Naive thymus-derived CD4-positive, alpha-beta T cell (primary cell): ENCODE measurements at regions of chr16 and their contacts with region 1.

Region 1: DNA sequence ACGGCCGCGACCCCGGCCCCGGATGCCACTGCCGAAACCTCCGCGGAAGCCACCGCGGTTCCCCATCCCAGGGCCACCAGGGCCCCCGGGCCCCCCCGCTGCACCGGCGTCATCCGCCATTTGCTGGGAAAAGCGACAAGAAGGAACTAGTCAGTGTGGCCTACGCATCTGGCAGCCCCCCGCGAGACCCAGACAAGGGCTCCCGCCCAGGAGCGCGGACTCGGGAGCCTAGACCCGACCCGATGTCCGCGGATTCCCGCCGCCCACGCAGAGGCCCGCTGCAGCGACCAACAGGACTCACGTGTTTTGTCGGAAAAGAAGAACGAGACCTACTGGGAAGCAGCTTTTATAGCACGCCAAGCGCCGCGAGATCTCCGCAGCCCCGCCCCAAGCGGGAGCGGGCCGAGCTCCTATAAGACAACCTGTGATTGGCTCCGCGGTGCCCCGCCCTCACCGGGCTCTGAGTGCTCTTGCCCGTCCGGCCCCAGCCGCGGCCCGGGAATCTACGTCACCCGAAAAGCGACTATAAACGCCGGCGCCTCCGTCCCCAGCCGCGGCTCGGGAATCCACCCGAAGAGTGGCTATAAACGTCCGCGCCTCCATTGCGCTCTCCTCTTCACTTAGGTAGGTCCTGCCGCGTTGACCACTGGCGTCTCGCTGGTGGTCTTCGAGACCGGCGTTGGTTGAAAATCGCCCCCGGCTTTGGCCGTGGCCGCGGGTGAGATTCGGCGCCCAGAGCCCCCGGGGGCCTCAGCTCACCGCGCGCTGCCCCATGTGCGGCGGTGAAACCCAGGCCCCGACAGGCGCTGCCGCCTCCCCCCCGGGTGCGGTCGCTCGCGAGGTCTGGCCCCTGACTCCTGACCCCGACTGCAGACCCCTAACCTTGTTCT is at the start of gene RPS2:
- DNase-seq: peak; percentile 94 to 99 (median 97)
- ATAC-seq: peak; percentile 97
- H3K4me3 ChIP-seq: peak within 1 kb of the TSS; percentile 81
- H3K4me3 Mint-ChIP-seq: peak within 1 kb of the TSS; percentile 89 to 97 (median 94)
- H3K27ac ChIP-seq: peak within 1 kb of the TSS; percentile 100
- H3K27ac Mint-ChIP-seq: peak within 1 kb of the TSS; percentile 95 to 98 (median 97)
- H3K4me1 ChIP-seq: peaks cover 25 to 41% of the 10 kb centered on the region in 2 donors
- H3K4me1 Mint-ChIP-seq: peaks cover 21 to 49% (median 32%) of the 10 kb centered on the region in 7 donors
- H3K27me3 ChIP-seq: no peaks in the 10 kb centered on the region
- H3K27me3 Mint-ChIP-seq: no peaks in the 10 kb centered on the region
- total RNA-seq, gene RPS2: 2,562 to 3,376 (median 2,918) TPM

Region 2: GRCh38 chr16:1782352-1783091 is 182.2 kb before region 1 on chr16 and contains the starts of genes NUBP2 and SPSB3:
- CTCF ChIA-PET with region 1: no interaction called
- POLR2A ChIA-PET with region 1: interaction called, 15 read pairs
- intact Hi-C with region 1: no loop called
- DNase-seq: peak; percentile 83 to 98 (median 97)
- ATAC-seq: peak; percentile 92
- H3K4me3 ChIP-seq: peak within 1 kb of the TSS; percentile 92
- H3K4me3 Mint-ChIP-seq: peak within 1 kb of the TSS; percentile 90 to 98 (median 94)
- H3K27ac ChIP-seq: peak within 1 kb of the TSS; percentile 76
- H3K27ac Mint-ChIP-seq: peak within 1 kb of the TSS; percentile 77 to 98 (median 93)
- H3K4me1 ChIP-seq: peaks cover 13 to 28% of the 10 kb centered on the region in 2 donors
- H3K4me1 Mint-ChIP-seq: peaks cover 0 to 48% (median 22%) of the 10 kb centered on the region in 7 donors
- H3K27me3 ChIP-seq: no peaks in the 10 kb centered on the region
- H3K27me3 Mint-ChIP-seq: peaks cover 0 to 2% (median 0%) of the 10 kb centered on the region in 5 donors
- total RNA-seq, gene NUBP2: 39.3 to 60.2 (median 48.6) TPM
- total RNA-seq, gene SPSB3: 38.2 to 127 (median 72.3) TPM

Region 3: DNA sequence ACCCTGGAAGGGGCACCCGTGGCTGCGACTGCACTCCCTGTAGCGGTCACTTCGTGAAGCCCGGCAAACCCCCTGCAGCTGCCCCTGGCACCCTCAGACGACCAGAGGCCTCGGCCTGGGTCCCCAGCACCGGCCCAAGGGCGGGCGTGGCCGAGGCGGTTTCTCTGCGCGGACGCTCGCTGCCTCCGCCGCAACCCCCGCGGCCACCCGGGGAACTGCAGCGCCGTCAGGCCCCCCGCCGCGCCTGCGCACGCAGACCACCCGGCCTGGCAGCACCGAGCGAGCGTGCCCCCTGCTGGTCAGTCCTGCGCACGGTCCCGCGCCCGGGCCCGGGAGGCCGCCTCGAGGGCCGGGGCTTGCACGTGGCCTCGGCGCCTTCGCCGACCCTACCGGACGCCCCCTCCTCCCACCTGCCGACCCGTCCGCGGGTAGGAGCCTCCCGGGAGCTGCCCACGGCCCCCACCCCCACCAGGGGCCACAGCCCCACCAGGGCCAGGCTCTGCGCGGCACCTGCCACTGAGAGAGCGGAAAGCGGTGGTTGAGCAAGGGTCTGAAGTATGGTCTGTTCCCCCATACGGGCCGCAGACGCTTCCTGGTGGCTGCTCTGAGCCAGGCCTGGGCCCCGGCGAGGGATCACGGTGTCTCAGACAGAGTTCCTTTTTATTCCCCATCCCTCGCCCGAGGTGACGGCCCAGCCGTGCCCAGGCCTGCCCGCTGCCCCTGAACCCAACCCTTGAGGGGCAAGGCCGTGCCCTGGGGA is 35.0 kb before region 1 on chr16:
- CTCF ChIA-PET with region 1: no interaction called
- POLR2A ChIA-PET with region 1: interaction called, 11 read pairs
- intact Hi-C with region 1: no loop called
- DNase-seq: peak; percentile 83 to 99 (median 91)
- ATAC-seq: peak; percentile 100
- H3K4me3 ChIP-seq: peak overlapping the region; percentile 48
- H3K4me3 Mint-ChIP-seq: peak overlapping the region in 6 of 10 donors; percentile 30 to 82 (median 74)
- H3K27ac ChIP-seq: peak overlapping the region; percentile 64
- H3K27ac Mint-ChIP-seq: no peak overlapping the region
- H3K4me1 ChIP-seq: no peaks in the 10 kb centered on the region
- H3K4me1 Mint-ChIP-seq: peaks cover 2 to 8% (median 4%) of the 10 kb centered on the region in 7 donors
- H3K27me3 ChIP-seq: no peaks in the 10 kb centered on the region
- H3K27me3 Mint-ChIP-seq: peaks cover 0 to 3% (median 2%) of the 10 kb centered on the region in 5 donors

Region 4: DNA sequence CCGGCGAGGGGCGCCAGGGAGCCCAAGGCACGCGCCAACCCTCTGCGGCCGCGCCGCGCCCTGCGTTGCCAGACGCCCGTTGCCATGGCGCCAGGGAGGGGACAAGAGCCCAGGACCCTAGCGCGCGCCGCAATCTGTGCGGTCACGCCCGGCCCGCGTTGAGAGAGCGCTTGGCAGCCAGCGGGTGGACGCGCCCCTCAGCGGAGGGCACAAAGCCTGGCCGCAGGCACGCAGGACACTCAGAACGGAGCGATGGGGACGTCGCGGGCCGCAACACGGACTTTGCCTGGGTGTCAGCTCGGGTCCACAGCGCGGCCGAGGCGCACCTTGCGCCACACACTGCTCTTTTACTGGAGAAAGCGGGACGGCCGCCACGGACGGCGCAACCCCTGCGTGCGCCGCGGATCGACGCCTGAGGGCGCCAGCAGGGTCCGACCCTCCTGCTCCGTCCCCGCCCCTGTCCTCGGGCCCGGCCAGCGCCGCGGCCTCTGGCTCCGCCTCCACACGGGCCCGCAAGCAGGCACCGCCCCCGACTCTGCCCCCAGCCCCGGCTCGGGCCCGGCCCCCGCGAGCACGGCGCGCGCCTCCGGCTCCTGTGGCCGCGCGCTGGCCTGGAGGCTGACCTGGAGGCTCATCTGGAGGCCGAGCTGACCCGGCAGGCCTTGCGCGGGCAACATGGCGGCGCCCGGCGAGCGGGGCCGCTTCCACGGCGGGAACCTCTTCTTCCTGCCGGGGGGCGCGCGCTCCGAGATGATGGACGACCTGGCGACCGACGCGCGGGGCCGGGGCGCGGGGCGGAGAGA is 19.0 kb after region 1 on chr16 and contains the start of gene GFER:
- CTCF ChIA-PET with region 1: no interaction called
- POLR2A ChIA-PET with region 1: interaction called, 61 read pairs
- intact Hi-C with region 1: loop called in 1 of 2 experiments (anchors 1 kb)
- DNase-seq: peak in 7 of 9 donors; percentile 24 to 88 (median 48)
- ATAC-seq: peak; percentile 89
- H3K4me3 ChIP-seq: peak within 1 kb of the TSS; percentile 71
- H3K4me3 Mint-ChIP-seq: peak within 1 kb of the TSS; percentile 66 to 90 (median 84)
- H3K27ac ChIP-seq: peak within 1 kb of the TSS; percentile 69
- H3K27ac Mint-ChIP-seq: peak within 1 kb of the TSS; percentile 4 to 89 (median 71)
- H3K4me1 ChIP-seq: peaks cover 0 to 13% of the 10 kb centered on the region in 2 donors
- H3K4me1 Mint-ChIP-seq: peaks cover 2 to 27% (median 17%) of the 10 kb centered on the region in 7 donors
- H3K27me3 ChIP-seq: peaks cover 0 to 3% of the 10 kb centered on the region in 2 donors
- H3K27me3 Mint-ChIP-seq: peaks cover 11 to 37% (median 14%) of the 10 kb centered on the region in 5 donors
- total RNA-seq, gene GFER: 14.0 to 28.2 (median 18.1) TPM

Region 5: DNA sequence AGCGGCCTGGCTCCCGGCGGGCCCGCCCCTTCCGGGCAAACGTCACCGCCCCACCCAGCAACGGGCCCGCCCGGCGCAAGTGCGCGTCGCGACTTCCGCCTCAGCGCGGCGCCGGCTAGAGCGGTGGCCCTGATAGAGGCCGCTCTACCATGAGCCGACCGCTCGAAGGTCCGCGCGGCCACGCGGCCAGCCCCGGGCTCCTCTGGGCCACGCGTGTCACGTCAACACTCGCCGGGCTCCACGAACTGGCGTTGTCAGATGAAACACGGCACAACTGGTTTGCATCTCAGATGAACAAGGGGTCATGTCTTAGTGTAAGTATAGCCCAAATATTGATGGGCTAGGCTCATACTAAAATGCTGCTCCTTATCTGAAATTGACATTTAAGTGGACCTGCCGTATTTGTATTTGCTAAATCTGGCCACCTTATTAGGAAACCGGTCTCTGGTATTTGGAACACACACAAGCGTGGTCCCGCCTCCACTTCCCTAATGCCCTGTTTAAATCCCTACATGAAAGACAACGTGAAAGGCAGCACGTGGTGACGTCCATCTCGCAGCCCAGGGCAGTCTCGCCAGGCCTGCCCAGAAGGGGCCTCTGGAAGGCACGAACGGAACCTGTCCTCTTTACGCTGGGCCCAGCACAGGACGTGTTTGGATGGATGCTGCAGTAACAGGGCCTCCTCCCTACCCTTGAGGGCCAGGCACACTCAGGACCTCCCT is 45.2 kb after region 1 on chr16 and contains the start of gene ZNF598:
- CTCF ChIA-PET with region 1: no interaction called
- POLR2A ChIA-PET with region 1: interaction called, 19 read pairs
- intact Hi-C with region 1: loop called (anchors 1 to 2 kb)
- DNase-seq: peak; percentile 64 to 87 (median 78)
- ATAC-seq: peak; percentile 97
- H3K4me3 ChIP-seq: peak within 1 kb of the TSS; percentile 77
- H3K4me3 Mint-ChIP-seq: peak within 1 kb of the TSS; percentile 87 to 94 (median 92)
- H3K27ac ChIP-seq: peak within 1 kb of the TSS; percentile 91
- H3K27ac Mint-ChIP-seq: peak within 1 kb of the TSS; percentile 85 to 99 (median 97)
- H3K4me1 ChIP-seq: peaks cover 26 to 29% of the 10 kb centered on the region in 2 donors
- H3K4me1 Mint-ChIP-seq: peaks cover 22 to 39% (median 32%) of the 10 kb centered on the region in 7 donors
- H3K27me3 ChIP-seq: no peaks in the 10 kb centered on the region
- H3K27me3 Mint-ChIP-seq: no peaks in the 10 kb centered on the region
- total RNA-seq, gene ZNF598: 44.3 to 63.2 (median 49.8) TPM

Region 6: DNA sequence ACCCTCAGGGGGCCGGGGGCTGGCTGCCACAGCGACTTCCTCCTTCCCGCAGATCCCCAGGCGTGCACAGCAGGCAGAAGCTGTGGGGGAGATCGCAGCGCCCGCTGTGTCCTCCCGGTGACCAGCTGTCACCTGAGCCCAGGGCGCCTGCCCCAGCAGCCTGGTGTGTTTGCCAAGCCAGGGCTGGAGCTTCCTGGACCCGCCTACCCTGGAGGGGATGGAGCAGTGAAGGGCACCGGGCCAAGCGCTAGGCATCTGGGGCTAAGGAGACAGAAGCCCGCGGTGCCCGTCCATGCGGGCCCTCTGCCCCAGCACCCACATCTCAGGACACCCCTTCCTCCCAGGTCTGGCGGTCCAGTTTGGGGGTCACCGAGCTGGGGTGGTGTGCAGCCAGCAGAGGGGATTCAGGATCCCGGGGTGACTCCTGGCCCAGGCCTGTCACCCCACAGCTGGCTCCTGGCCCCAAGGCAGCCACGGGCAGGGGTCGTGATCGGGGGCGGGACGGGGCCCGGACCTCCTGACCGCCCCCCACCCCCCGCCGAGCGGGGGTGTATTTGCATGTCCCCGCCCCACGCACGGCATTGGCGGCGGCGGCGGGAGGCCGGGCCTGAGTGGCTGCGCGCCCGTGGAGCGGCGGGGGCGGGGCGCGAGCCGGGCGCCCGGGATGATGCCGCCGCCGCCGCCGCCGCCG is 183.4 kb after region 1 on chr16 and contains the start of gene RAB26:
- CTCF ChIA-PET with region 1: no interaction called
- POLR2A ChIA-PET with region 1: interaction called, 44 read pairs
- intact Hi-C with region 1: loop called in 1 of 2 experiments (anchors 1 kb)
- DNase-seq: peak; percentile 42 to 76 (median 56)
- ATAC-seq: peak; percentile 92
- H3K4me3 ChIP-seq: no peak within 1 kb of the TSS
- H3K4me3 Mint-ChIP-seq: peak within 1 kb of the TSS in 8 of 10 donors; percentile 29 to 67 (median 52)
- H3K27ac ChIP-seq: peak within 1 kb of the TSS; percentile 20
- H3K27ac Mint-ChIP-seq: peak within 1 kb of the TSS in 1 of 9 donors; percentile 48
- H3K4me1 ChIP-seq: peaks cover 13 to 31% of the 10 kb centered on the region in 2 donors
- H3K4me1 Mint-ChIP-seq: peaks cover 0 to 16% (median 11%) of the 10 kb centered on the region in 7 donors
- H3K27me3 ChIP-seq: no peaks in the 10 kb centered on the region
- H3K27me3 Mint-ChIP-seq: peaks cover 0 to 3% (median 0%) of the 10 kb centered on the region in 5 donors
- total RNA-seq, gene RAB26: 0.86 TPM in 1 of 5 experiments, not detected in the others

Region 7: DNA sequence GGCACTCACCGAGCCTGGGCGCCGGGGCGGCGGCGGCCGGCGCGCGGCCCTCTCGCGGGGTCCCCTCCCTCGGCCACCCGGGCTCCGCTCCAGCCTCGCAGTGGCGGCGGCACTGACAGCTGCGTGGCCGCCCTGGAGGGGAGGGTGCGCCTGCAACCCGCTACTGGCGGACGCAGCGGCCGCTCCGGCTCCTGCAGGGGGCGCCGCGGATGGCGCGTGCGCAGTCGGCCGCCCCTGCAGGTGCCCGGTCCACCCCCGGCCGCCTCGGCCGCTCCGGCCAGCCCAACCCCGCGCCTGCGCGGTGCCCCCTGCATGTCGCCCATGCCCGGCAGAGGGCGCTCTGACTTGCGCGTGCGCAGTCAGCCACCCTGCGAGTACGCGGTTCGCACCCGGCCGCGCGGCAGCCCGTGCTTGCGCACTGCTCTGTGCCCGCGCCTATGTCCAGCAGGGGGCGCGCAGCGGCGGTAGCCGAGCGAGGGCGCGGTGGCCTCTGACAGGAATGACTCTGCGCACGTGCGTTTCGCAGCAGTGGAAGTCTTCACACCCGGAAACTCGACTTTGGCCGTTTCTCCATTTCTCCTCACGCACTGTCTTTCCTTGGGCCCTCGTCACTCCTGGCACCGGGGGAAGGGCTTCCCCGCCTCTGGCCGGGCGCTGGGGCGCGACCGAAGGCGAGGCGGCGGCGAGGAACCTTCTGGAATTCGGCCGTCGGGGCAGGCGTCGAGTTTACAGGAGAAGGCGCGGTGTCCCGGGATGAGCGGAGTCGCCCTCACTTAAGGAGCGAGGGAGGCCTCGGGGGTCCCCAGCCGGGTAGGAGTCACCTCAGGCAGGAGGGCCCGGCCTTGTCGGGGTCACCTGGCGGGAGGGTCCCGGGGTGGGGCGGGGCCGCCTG is 376.1 kb after region 1 on chr16 and contains the start of gene ABCA3:
- CTCF ChIA-PET with region 1: no interaction called
- POLR2A ChIA-PET with region 1: no interaction called
- intact Hi-C with region 1: no loop called
- DNase-seq: peak; percentile 85 to 100 (median 93)
- ATAC-seq: peak; percentile 96
- H3K4me3 ChIP-seq: peak within 1 kb of the TSS; percentile 62
- H3K4me3 Mint-ChIP-seq: peak within 1 kb of the TSS; percentile 78 to 91 (median 86)
- H3K27ac ChIP-seq: peak within 1 kb of the TSS; percentile 15
- H3K27ac Mint-ChIP-seq: peak within 1 kb of the TSS in 7 of 9 donors; percentile 31 to 82 (median 64)
- H3K4me1 ChIP-seq: peaks cover 6 to 9% of the 10 kb centered on the region in 2 donors
- H3K4me1 Mint-ChIP-seq: peaks cover 9 to 19% (median 16%) of the 10 kb centered on the region in 7 donors
- H3K27me3 ChIP-seq: no peaks in the 10 kb centered on the region
- H3K27me3 Mint-ChIP-seq: peaks cover 0 to 40% (median 0%) of the 10 kb centered on the region in 5 donors
- total RNA-seq, gene ABCA3: 7.0 to 10.0 (median 8.1) TPM

Region 8: DNA sequence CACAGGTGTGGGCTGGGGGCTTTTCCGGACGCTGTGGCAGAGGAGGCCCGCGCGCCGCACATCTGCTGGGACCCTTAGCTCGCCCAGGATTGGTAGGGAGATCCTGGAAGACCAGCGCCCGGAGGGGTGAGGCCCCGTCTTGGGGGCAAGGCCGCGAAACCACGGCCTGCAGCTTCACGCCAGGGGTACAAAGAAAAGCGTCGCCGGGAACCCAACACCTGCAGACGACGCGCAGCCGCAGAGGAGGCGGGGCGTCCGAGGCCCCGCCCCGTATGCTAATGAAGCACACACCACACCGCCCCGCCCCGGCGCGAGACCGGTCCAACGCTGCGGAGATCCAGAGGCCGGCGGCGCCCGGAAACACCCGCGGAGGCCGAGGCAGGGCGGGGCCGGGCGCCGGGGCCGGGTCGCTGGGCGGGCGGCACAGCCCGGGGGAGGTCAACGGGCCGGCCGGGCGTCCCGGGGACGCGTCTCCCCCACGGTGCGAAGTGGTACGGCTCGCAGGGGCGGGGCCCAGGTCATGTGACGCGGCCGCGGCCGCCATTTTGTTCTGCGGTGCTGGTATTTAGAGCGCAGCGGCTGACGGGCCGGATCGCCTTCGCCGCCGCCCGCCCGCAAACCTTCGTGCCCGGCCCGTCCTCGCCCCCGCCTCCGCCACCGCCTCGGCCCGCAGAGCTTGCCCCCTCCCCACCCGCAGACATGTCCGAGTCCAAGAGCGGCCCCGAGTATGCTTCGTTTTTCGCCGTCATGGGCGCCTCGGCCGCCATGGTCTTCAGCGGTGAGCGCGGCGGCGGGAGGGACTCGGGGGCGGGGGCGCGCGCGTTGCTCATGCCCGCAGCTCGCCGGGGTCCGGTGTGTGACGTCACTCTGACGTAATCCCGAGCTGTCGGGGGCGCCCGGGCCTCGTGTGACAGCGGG is 548.9 kb after region 1 on chr16 and contains the start of gene ATP6V0C:
- CTCF ChIA-PET with region 1: no interaction called
- POLR2A ChIA-PET with region 1: interaction called, 7 read pairs
- intact Hi-C with region 1: loop called in 1 of 2 experiments (anchors 5 kb)
- DNase-seq: peak; percentile 89 to 98 (median 94)
- ATAC-seq: peak; percentile 87
- H3K4me3 ChIP-seq: peak within 1 kb of the TSS; percentile 71
- H3K4me3 Mint-ChIP-seq: peak within 1 kb of the TSS; percentile 85 to 94 (median 91)
- H3K27ac ChIP-seq: peak within 1 kb of the TSS; percentile 100
- H3K27ac Mint-ChIP-seq: peak within 1 kb of the TSS; percentile 90 to 98 (median 96)
- H3K4me1 ChIP-seq: peaks cover 31 to 44% of the 10 kb centered on the region in 2 donors
- H3K4me1 Mint-ChIP-seq: peaks cover 36 to 60% (median 48%) of the 10 kb centered on the region in 7 donors
- H3K27me3 ChIP-seq: no peaks in the 10 kb centered on the region
- H3K27me3 Mint-ChIP-seq: peaks cover 0 to 3% (median 0%) of the 10 kb centered on the region in 5 donors
- total RNA-seq, gene ATP6V0C: 98.2 to 303 (median 113) TPM